Ascending aorta (tissue), 2 donors: ENCODE measurements at regions of chr19 and their contacts with region 1.

Region 1: DNA sequence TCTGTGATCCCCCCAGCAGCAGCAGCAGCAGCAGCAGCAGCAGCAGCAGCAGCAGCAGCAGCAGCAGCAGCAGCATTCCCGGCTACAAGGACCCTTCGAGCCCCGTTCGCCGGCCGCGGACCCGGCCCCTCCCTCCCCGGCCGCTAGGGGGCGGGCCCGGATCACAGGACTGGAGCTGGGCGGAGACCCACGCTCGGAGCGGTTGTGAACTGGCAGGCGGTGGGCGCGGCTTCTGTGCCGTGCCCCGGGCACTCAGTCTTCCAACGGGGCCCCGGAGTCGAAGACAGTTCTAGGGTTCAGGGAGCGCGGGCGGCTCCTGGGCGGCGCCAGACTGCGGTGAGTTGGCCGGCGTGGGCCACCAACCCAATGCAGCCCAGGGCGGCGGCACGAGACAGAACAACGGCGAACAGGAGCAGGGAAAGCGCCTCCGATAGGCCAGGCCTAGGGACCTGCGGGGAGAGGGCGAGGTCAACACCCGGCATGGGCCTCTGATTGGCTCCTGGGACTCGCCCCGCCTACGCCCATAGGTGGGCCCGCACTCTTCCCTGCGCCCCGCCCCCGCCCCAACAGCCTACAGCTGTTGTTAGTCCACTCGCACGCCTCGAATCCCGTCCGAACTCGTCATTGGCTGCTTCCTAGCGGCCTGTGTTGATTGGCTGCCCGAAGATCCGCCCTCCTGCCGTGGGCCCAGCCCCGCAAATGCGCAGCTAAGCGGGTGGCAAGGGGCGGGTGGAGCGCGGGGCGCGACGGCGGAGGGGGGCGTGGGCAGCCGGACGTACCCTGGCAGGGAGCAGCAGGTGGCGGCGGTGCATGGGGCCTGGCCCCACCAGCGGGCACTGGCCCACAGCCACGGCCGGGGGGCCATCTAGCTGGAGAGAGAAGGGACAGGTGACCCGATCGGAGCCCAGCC is 1.4 kb upstream of the SIX5 start:
- DNase-seq: peak; percentile 89 to 98
- H3K4me3 ChIP-seq: peak overlapping the region; percentile 65 to 84
- H3K27ac ChIP-seq: peak overlapping the region; percentile 81 to 96
- H3K4me1 ChIP-seq: peaks cover 12 to 26% of the 10 kb centered on the region in 2 donors
- H3K27me3 ChIP-seq: no peaks in the 10 kb centered on the region
- CTCF ChIP-seq: peak; percentile 96 to 97 (median 97)

Region 2: GRCh38 chr19:45717166-45717982 is 53.1 kb before region 1 on chr19:
- intact Hi-C with region 1: loop called (anchors 1 kb)
- DNase-seq: peak; percentile 97 to 99
- H3K4me3 ChIP-seq: peak overlapping the region; percentile 68 to 75
- H3K27ac ChIP-seq: peak overlapping the region; percentile 75 to 92
- H3K4me1 ChIP-seq: peaks cover 0 to 11% of the 10 kb centered on the region in 2 donors
- H3K27me3 ChIP-seq: no peaks in the 10 kb centered on the region
- CTCF ChIP-seq: peak in 2 of 3 experiments; percentile 24 to 38

Region 3: GRCh38 chr19:45792470-45793177 is 22.2 kb after region 1 on chr19 and contains the start of gene DMWD:
- intact Hi-C with region 1: loop called (anchors 1 kb)
- DNase-seq: peak; percentile 95 to 100
- H3K4me3 ChIP-seq: peak within 1 kb of the TSS; percentile 68 to 87
- H3K27ac ChIP-seq: peak within 1 kb of the TSS; percentile 60 to 74
- H3K4me1 ChIP-seq: peaks cover 0 to 10% of the 10 kb centered on the region in 2 donors
- H3K27me3 ChIP-seq: no peaks in the 10 kb centered on the region
- CTCF ChIP-seq: no peak
- total RNA-seq, gene DMWD: 110 TPM

Region 4: DNA sequence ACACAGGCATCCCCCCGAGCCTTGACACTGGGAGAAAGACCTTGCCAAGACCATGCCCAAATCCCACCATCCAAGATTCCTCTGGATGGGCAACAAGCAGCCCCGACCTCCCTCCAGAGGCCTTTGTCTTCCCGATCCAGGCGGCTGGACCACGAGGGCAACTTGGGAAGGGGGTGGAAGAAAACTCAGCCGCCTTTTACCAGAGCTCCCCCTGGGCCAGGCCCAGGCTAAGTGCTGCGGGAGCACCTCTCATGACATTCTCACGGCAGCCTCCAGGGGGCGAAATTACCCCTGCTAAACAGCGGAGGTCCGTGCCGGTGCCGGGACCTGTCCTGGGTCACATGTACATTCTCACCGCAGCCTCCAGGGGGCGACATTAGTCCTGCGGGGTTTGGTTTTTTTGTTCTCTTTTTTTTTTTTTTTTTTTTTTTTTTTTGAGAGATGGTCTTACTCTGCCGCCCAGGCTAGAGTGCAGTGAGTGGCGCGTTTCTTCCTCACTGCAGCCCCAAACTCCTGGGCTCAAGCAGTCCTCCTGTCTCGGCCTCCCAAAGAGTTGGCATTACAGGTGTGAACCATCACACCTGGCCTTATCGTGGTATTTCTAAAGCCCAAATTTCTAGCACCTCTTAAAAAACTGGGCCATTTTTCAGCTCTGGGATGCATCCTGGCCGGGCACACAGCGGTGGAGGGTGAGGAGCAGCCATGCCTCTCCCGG is 46.7 kb after region 1 on chr19:
- intact Hi-C with region 1: no loop called
- DNase-seq: peak; percentile 59 to 96
- H3K4me3 ChIP-seq: no peak overlapping the region
- H3K27ac ChIP-seq: no peak overlapping the region
- H3K4me1 ChIP-seq: peaks cover 0 to 4% of the 10 kb centered on the region in 2 donors
- H3K27me3 ChIP-seq: no peaks in the 10 kb centered on the region
- CTCF ChIP-seq: peak; percentile 94 to 99 (median 95)

Region 5: GRCh38 chr19:45862564-45863334 is 92.3 kb after region 1 on chr19 and contains the start of gene SYMPK:
- intact Hi-C with region 1: loop called (anchors 2 kb)
- DNase-seq: peak; percentile 95 to 99
- H3K4me3 ChIP-seq: peak within 1 kb of the TSS; percentile 73 to 88
- H3K27ac ChIP-seq: peak within 1 kb of the TSS; percentile 79 to 94
- H3K4me1 ChIP-seq: peaks cover 4 to 15% of the 10 kb centered on the region in 2 donors
- H3K27me3 ChIP-seq: peaks cover 9% of the 10 kb centered on the region
- CTCF ChIP-seq: no peak
- total RNA-seq, gene SYMPK: 103 TPM